K562 (cell line): ENCODE measurements at regions of chr10 and their contacts with region 1.

Region 1: GRCh38 chr10:1070921-1071349 is 14.8 kb downstream of the WDR37 start:
- DNase-seq: no peak
- ATAC-seq: no peak
- H3K4me3 ChIP-seq: no peak overlapping the region
- H3K27ac ChIP-seq: no peak overlapping the region
- H3K4me1 ChIP-seq: no peaks in the 10 kb centered on the region; a peak in 2 of 5 replicates
- H3K27me3 ChIP-seq: no peaks in the 10 kb centered on the region
- CTCF ChIP-seq: no peak
- EP300 ChIP-seq: no peak
- POLR2A ChIP-seq: no peak
- RAD21 ChIP-seq: no peak

Region 2: DNA sequence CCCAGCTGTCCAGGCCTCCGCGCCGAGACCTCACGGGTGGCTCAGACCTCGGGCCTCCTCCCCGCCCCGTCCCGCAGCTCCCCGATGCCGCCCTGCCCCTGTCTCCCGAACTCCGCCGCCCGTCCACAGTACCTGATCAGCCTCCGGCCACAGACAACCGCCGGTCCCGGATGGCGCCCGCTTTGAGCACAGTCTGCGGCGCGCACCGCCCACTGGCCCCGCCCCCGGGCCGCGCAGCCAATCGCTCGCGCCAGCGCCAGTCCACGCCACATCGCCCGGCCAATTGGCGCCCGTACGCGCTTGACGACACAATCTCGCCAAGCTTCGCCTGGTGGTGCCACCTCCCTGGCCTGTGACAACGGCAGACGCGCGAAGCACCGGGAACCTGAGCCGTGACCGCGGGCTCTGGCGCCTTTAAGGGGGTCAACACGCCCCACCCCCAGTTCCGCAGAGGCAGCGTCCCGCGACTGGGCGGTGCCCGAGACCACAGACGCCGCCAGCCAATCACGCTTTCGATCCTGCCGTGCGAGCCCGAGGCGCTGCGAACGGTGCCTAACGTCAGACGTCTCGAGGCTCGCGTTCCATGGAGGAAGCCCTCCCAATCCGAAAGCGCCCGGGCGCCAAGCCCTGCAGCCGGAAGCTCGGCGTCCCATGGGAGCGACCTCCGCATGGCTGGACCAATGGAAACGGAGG is 22.1 kb before region 1 on chr10 and contains the start of gene IDI1:
- CTCF ChIA-PET with region 1: no interaction called
- POLR2A ChIA-PET with region 1: interaction called, 11 read pairs
- in situ Hi-C with region 1: no loop called
- intact Hi-C with region 1: no loop called
- DNase-seq: peak; percentile 92 to 98 (median 96)
- ATAC-seq: peak; percentile 93
- H3K4me3 ChIP-seq: peak within 1 kb of the TSS; percentile 94
- H3K27ac ChIP-seq: peak within 1 kb of the TSS; percentile 93
- H3K4me1 ChIP-seq: peaks cover 21 to 31% of the 10 kb centered on the region in 2 experiments
- H3K27me3 ChIP-seq: no peaks in the 10 kb centered on the region
- CTCF ChIP-seq: no peak
- EP300 ChIP-seq: no peak; the same call in none of the 2 replicates
- POLR2A ChIP-seq: peak; percentile 93
- RAD21 ChIP-seq: 0 out of 4 replicates have a peak, but pooled peaks of 1 of the 2 experiments have one; percentile 8
- polyA plus RNA-seq, gene IDI1: 167 to 189 TPM

Region 3: DNA sequence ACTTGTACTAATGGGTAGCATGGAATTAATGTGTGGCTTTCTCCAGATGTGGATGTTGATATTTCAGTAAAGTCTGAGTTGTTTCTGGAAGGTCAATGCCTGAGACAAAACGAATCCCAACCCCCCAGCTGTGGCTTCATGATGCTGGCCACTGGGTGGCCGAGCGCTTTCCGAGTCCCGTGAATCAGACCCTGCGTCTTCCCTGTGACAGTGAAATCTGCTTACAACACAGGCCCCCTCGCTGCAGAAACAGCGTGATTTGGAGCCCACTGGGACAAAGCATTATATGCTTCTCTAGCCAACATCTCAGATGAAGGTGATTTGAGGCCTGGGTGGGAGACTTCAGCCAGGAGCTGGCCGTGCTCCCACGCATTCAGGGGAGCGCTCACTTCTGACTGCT is 109.9 kb after region 1 on chr10:
- CTCF ChIA-PET with region 1: no interaction called
- POLR2A ChIA-PET with region 1: no interaction called
- in situ Hi-C with region 1: no loop called
- intact Hi-C with region 1: no loop called
- DNase-seq: peak in 2 of 4 experiments; percentile 23 to 40
- ATAC-seq: peak; percentile 71
- H3K4me3 ChIP-seq: no peak overlapping the region
- H3K27ac ChIP-seq: no peak overlapping the region
- H3K4me1 ChIP-seq: peaks cover 0 to 13% of the 10 kb centered on the region in 2 experiments; a peak in 2 of 5 replicates
- H3K27me3 ChIP-seq: peaks cover 60 to 89% of the 10 kb centered on the region in 2 experiments
- CTCF ChIP-seq: peak; percentile 12 to 28 (median 26); a peak in 1 of 6 replicates
- EP300 ChIP-seq: no peak
- POLR2A ChIP-seq: no peak
- RAD21 ChIP-seq: no peak